PC-9 (cell line): ENCODE measurements at regions of chr6 and their contacts with region 1.

Region 1: DNA sequence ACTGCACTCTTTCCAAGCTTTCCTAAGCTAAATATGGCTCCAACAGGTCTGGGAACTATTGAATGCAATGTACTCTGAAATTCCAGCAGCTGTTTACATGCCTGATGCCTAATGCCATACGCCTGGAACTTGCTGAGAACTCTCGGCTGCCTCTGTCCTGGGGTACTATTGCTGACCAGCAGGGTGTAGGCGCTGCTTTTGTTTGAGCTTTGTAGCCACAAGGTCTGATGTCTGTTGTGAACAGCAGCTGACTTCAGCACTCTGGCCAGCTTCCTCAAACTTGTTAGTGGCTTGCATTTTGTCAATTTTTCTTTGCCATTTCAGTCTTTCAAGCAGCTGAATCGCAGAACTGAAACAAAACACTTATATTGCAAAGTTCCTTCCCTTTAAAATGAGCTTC is 26.7 kb downstream of the SAYSD1 start:
- DNase-seq: peak; percentile 17 to 53
- H3K4me3 ChIP-seq: no peak overlapping the region
- H3K27ac ChIP-seq: no peak overlapping the region
- H3K4me1 ChIP-seq: no peaks in the 10 kb centered on the region
- H3K27me3 ChIP-seq: peaks cover 98% of the 10 kb centered on the region
- CTCF ChIP-seq: peak; percentile 52

Region 2: DNA sequence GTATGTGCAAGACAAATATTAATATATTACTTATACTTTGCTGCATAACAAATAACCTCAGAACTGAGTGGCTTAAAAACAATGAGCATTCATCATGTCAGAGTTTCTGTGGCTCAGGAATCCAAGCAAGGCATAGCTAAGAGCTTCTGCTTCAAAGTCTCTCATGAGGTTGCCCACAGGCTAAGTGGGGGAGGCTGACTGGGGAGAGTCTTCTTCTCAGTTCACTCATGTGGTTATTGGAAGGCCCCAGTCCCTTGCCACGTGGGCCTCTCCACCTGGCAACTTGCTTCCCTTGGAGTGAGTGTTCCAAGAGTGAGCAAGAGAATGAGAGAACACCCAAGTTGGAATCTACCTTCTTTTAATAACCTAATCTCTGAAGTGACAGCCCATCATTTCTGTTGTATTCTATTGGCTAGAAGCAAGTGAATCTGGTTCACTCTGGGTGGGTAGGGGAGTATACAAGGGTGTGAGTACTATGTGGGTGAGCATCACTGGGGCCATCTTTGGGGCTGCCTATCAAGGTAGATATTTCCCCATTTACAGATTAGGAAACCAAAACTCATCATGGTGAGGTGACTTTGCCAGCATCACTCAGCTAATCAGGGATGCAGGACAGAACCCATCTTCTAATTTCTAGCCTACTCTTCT is 337.2 kb before region 1 on chr6:
- CTCF ChIA-PET with region 1: no interaction called
- POLR2A ChIA-PET with region 1: interaction called, 14 read pairs
- intact Hi-C with region 1: no loop called
- DNase-seq: no peak
- H3K4me3 ChIP-seq: no peak overlapping the region
- H3K27ac ChIP-seq: no peak overlapping the region
- H3K4me1 ChIP-seq: peaks cover 31% of the 10 kb centered on the region
- H3K27me3 ChIP-seq: no peaks in the 10 kb centered on the region
- CTCF ChIP-seq: no peak

Region 3: DNA sequence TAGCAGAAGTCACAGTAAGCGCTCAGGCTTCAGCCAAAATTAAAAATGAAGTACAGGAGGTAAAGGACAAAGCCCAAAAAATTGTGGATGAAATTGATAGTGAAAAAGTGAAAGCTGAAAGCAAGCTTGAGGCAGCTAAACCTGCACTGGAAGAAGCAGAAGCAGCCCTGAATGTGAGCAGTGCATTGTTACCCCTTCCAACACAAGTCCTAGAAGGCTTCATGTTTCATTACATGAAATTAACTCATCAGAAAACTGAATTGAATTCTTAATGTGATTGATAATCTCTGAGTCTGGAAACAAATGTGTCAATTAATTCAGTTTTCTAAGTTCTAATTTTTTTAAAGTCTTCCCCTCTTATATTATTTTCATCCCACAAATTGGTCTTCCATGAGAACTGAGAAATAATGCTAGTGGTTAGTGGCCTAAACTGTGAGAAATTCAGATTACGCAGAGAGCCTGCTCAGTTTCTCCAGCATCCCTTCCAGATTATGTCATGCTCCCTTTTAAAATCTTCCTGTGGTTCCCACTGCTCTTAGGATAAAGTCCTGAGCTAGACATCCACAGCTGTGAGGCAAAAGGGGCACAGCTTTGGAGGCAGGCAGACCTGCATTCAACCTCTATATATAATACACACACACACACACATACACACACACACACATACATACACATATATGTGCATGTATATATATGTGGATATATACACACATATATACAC is 173.0 kb before region 1 on chr6:
- CTCF ChIA-PET with region 1: no interaction called
- POLR2A ChIA-PET with region 1: no interaction called
- intact Hi-C with region 1: no loop called
- DNase-seq: no peak
- H3K4me3 ChIP-seq: no peak overlapping the region
- H3K27ac ChIP-seq: no peak overlapping the region
- H3K4me1 ChIP-seq: no peaks in the 10 kb centered on the region
- H3K27me3 ChIP-seq: no peaks in the 10 kb centered on the region
- CTCF ChIP-seq: no peak

Region 4: GRCh38 chr6:39114704-39115599 is 26.6 kb after region 1 on chr6 and contains the start of gene SAYSD1:
- CTCF ChIA-PET with region 1: no interaction called
- POLR2A ChIA-PET with region 1: no interaction called
- intact Hi-C with region 1: no loop called
- DNase-seq: peak; percentile 76 to 85
- H3K4me3 ChIP-seq: peak within 1 kb of the TSS; percentile 72
- H3K27ac ChIP-seq: peak within 1 kb of the TSS; percentile 76
- H3K4me1 ChIP-seq: peaks cover 18% of the 10 kb centered on the region
- H3K27me3 ChIP-seq: peaks cover 5% of the 10 kb centered on the region; the same call in 1 of the 2 replicates
- CTCF ChIP-seq: no peak
- total RNA-seq, gene SAYSD1: 12.2 and 12.6 TPM in 2 replicates

Region 5: DNA sequence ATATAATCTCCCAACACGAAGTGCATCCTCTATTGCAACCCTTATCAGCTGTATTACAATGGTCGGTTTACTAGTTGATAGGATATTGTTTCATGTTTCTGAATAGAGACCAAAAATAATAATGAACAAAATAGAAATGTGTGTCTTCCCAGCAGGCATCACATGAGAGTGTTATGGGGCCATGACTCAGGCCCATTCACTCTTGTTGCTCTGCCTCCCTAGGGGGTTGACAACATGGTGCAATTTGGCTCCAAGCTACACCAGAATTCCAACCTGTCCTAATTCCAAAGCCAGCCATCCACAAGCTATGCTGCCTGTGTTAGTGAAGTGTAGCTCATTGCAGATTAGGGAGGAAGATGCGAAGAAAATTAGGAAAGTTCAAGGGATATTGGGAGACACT is 39.8 kb after region 1 on chr6:
- CTCF ChIA-PET with region 1: no interaction called
- POLR2A ChIA-PET with region 1: no interaction called
- intact Hi-C with region 1: no loop called
- DNase-seq: no peak
- H3K4me3 ChIP-seq: no peak overlapping the region
- H3K27ac ChIP-seq: no peak overlapping the region
- H3K4me1 ChIP-seq: no peaks in the 10 kb centered on the region
- H3K27me3 ChIP-seq: peaks cover 55% of the 10 kb centered on the region
- CTCF ChIP-seq: no peak

Region 6: DNA sequence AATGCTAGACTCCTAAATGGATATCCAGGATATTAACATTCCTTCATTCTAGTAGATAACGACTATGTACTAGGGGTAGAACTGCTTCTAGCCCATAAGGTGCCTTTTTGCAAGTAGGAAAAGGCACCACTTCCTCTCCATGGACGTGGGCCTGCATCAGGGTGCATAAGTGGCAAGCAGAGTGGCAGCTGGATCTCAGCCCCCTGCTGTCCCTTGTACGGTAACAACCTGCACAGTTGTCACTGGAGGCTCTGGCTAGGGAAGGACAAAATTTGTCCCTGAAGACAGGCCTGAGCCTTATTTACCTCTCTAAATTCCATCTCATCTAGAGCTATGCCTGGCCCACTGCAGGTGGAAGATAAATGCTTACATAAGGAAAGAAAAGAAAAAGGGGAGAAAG is 69.2 kb after region 1 on chr6:
- CTCF ChIA-PET with region 1: no interaction called
- POLR2A ChIA-PET with region 1: no interaction called
- intact Hi-C with region 1: loop called (anchors 5 kb)
- DNase-seq: no peak
- H3K4me3 ChIP-seq: no peak overlapping the region
- H3K27ac ChIP-seq: no peak overlapping the region
- H3K4me1 ChIP-seq: no peaks in the 10 kb centered on the region
- H3K27me3 ChIP-seq: no peaks in the 10 kb centered on the region
- CTCF ChIP-seq: no peak

Region 7: DNA sequence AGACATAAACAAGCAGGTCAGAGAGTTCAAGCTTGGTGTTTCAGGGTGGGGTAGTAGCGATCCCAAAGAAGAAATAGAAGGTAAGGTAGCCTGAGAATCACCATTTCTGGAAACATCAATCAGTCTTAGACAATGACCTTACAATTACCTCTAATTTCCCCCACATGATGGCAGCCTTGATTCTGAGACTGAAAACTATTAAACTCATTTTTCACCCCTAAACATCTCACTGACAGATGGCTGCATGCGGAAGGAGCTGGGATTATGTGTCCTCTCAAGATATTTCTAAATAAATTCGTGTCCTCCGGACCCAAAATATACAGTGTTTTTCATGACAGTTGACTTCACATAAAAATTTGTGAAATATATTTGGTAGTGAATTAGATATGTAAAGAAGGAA is 575.8 kb after region 1 on chr6:
- CTCF ChIA-PET with region 1: no interaction called
- POLR2A ChIA-PET with region 1: no interaction called
- intact Hi-C with region 1: no loop called
- DNase-seq: no peak
- H3K4me3 ChIP-seq: no peak overlapping the region
- H3K27ac ChIP-seq: no peak overlapping the region
- H3K4me1 ChIP-seq: no peaks in the 10 kb centered on the region
- H3K27me3 ChIP-seq: no peaks in the 10 kb centered on the region
- CTCF ChIP-seq: no peak